ENCODE measurements at regions of chr14 and their contacts with region 1.

Region 1: DNA sequence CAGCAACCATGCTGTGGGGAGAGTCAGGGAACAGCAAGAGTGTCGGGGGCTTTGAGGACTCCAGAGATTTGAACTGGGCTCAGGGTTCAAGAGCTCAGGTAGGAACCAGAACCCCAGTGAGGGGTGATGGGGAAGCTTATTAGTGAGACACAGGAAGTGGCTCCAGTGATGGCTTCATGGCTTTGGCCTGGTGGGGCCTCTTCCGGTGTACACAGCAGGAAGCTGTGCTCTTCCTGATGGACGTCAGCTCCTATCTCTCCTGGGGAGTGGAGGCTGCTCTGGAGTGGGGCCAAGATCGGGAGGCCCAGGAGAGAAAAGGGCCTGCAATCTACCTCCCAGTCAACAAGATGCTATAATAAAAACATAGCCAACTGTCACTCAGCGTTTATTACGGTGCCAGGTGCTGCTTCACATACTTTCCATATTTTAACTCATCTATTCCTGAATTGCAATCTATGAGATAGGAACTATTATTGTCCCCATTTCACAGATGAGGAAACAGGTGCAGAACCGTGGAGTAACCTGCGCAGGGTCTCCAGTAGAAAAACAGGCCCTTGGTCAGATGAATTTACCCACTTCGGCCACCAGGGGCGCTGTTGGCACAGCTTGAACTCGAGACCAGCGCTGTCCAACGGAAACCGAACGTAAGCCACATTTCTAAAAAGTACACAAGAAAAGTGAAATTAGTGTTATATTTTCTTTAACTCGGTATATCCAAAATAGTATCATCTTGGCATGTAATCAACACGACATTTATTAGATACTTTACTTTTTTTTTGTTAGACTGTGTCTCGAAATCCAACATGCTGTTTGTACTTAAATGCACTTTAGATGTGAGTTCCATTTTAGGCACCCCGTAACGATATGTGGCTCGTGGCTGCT is 63.6 kb upstream of the DLK1 start:
- DNase-seq: peak; percentile 68
- H3K4me3 Mint-ChIP-seq: no peak overlapping the region
- H3K27ac Mint-ChIP-seq: peak overlapping the region; percentile 31
- H3K4me1 Mint-ChIP-seq: peaks cover 5% of the 10 kb centered on the region
- H3K27me3 Mint-ChIP-seq: peaks cover 2% of the 10 kb centered on the region

Region 2: GRCh38 chr14:100622708-100623485 is 40.2 kb before region 1 on chr14:
- CTCF ChIA-PET with region 1: no interaction called
- POLR2A ChIA-PET with region 1: no interaction called
- DNase-seq: no peak
- H3K4me3 Mint-ChIP-seq: no peak overlapping the region
- H3K27ac Mint-ChIP-seq: no peak overlapping the region
- H3K4me1 Mint-ChIP-seq: peaks cover 7% of the 10 kb centered on the region
- H3K27me3 Mint-ChIP-seq: peaks cover 30% of the 10 kb centered on the region

Region 3: GRCh38 chr14:100673036-100673806 is 10.1 kb after region 1 on chr14:
- CTCF ChIA-PET with region 1: interaction called, 10 read pairs
- POLR2A ChIA-PET with region 1: no interaction called
- DNase-seq: no peak
- H3K4me3 Mint-ChIP-seq: no peak overlapping the region
- H3K27ac Mint-ChIP-seq: no peak overlapping the region
- H3K4me1 Mint-ChIP-seq: no peaks in the 10 kb centered on the region
- H3K27me3 Mint-ChIP-seq: peaks cover 41% of the 10 kb centered on the region

Region 4: DNA sequence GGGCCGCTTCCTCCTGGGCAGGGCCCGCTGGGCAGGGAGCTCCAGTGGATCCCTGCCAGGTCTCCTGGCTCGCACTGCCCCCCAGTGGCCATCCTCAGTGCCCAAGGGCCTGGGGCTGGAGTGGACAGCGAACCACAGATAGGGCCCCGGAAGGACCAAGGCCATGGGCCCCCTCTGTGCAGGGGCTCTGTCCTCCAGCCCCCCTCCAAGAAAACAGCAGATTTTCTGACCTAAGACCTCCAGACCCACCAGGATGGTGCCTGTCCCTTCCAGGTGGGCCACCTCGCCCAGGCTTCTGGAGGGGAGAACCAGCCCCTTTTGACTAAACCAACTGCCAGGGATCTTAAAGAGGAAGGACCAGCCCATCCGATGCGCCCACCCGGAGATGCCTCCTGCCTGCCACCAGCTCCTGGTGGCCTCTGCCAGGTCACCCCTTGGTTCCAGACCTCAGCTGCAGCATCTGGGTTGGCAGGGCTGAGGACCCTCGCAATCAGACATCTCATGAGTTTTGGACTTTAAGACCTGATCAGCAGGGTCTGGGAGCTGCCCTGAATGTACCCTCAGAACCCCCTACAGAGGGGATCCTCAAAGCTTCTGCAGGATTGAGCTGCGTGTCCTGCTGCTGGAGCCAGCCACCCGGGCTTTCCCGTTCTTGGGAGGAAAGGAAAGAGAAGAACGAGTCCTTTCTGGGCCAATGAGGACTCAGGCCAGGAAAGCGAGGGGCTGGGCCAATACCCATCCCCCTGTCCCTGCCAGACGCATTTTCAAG is 572.4 kb after region 1 on chr14:
- CTCF ChIA-PET with region 1: no interaction called
- POLR2A ChIA-PET with region 1: no interaction called
- DNase-seq: peak; percentile 30
- H3K4me3 Mint-ChIP-seq: no peak overlapping the region
- H3K27ac Mint-ChIP-seq: no peak overlapping the region
- H3K4me1 Mint-ChIP-seq: no peaks in the 10 kb centered on the region
- H3K27me3 Mint-ChIP-seq: no peaks in the 10 kb centered on the region

Measured in activated CD4-positive, alpha-beta T cell treated with anti-CD3 and anti-CD28 coated beads, Interleukin-2, amount 10 ng/mL, durations not matched to agents 7 days and 5 days (primary cell).